PC-9 (cell line): ENCODE measurements at regions of chr9 and their contacts with region 1.

Region 1: DNA sequence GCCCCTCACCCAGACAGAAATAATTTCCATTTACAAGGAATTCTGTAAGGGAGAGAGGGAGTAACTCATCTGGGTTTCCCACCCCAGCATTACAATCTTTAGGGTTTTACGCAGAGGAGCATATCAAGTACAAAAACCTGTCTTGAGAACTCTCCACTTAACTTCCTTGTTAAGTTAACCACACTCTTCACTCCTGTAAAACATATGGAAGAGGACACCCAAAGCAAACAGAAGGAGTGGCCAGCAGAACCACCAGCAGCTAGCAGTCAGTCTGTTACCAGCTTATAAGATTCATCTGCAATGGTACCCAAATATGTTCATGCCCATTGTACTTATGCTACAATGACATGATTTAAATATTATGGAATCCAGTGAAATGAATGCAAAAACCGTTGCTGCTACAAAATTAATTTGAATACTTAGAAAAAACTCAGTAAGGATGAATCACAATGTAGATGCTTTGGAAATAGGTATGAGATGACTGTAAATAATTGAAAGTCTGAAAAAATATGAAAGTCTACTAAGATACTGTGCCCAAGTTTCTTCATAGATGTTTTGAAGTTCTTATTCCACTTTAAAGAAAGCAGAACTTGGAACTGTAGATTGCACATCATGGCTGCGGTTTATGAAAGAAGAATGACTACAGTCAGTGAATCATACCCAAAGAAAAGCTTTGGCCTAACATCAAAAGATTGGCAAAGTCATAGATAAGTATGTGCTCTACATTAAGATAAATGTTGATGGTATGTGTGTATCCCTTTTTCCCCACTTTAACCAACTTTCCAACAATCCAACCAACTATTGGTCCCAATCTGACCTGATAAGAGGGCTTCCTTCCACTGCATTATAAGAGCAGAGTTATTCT is 233.6 kb downstream of the ACTL7B start:
- DNase-seq: no peak
- H3K4me3 ChIP-seq: no peak overlapping the region
- H3K27ac ChIP-seq: no peak overlapping the region
- H3K4me1 ChIP-seq: no peaks in the 10 kb centered on the region
- H3K27me3 ChIP-seq: no peaks in the 10 kb centered on the region
- CTCF ChIP-seq: no peak

Region 2: GRCh38 chr9:108579757-108580439 is 42.3 kb before region 1 on chr9:
- CTCF ChIA-PET with region 1: no interaction called
- POLR2A ChIA-PET with region 1: interaction called, 21 read pairs
- intact Hi-C with region 1: no loop called
- DNase-seq: peak; percentile 84 to 91
- H3K4me3 ChIP-seq: no peak overlapping the region
- H3K27ac ChIP-seq: no peak overlapping the region
- H3K4me1 ChIP-seq: peaks cover 23% of the 10 kb centered on the region
- H3K27me3 ChIP-seq: no peaks in the 10 kb centered on the region
- CTCF ChIP-seq: no peak

Region 3: GRCh38 chr9:108609227-108609896 is 12.9 kb before region 1 on chr9:
- CTCF ChIA-PET with region 1: no interaction called
- POLR2A ChIA-PET with region 1: no interaction called
- intact Hi-C with region 1: no loop called
- DNase-seq: no peak
- H3K4me3 ChIP-seq: no peak overlapping the region
- H3K27ac ChIP-seq: no peak overlapping the region
- H3K4me1 ChIP-seq: no peaks in the 10 kb centered on the region
- H3K27me3 ChIP-seq: no peaks in the 10 kb centered on the region
- CTCF ChIP-seq: no peak

Region 4: GRCh38 chr9:110323818-110324217 is 1701.6 kb after region 1 on chr9:
- CTCF ChIA-PET with region 1: no interaction called
- POLR2A ChIA-PET with region 1: interaction called, 11 read pairs
- intact Hi-C with region 1: no loop called
- DNase-seq: no peak
- H3K4me3 ChIP-seq: no peak overlapping the region
- H3K27ac ChIP-seq: no peak overlapping the region
- H3K4me1 ChIP-seq: peaks cover 4% of the 10 kb centered on the region; the same call in 1 of the 2 replicates
- H3K27me3 ChIP-seq: no peaks in the 10 kb centered on the region
- CTCF ChIP-seq: no peak